Naive thymus-derived CD4-positive, alpha-beta T cell (primary cell): ENCODE measurements at regions of chr4 and their contacts with region 1.

Region 1: GRCh38 chr4:112895811-112896608 is 153.4 kb upstream of the ANK2 start:
- DNase-seq: no peak
- ATAC-seq: no peak
- H3K4me3 ChIP-seq: no peak overlapping the region
- H3K4me3 Mint-ChIP-seq: no peak overlapping the region
- H3K27ac ChIP-seq: no peak overlapping the region
- H3K27ac Mint-ChIP-seq: no peak overlapping the region
- H3K4me1 ChIP-seq: no peaks in the 10 kb centered on the region
- H3K4me1 Mint-ChIP-seq: no peaks in the 10 kb centered on the region
- H3K27me3 ChIP-seq: no peaks in the 10 kb centered on the region
- H3K27me3 Mint-ChIP-seq: peaks cover 0 to 39% (median 20%) of the 10 kb centered on the region in 5 donors

Region 2: GRCh38 chr4:112830753-112831386 is 65.1 kb before region 1 on chr4:
- CTCF ChIA-PET with region 1: no interaction called
- POLR2A ChIA-PET with region 1: no interaction called
- intact Hi-C with region 1: loop called in 1 of 2 experiments (anchors 10 kb)
- DNase-seq: no peak
- ATAC-seq: no peak
- H3K4me3 ChIP-seq: no peak overlapping the region
- H3K4me3 Mint-ChIP-seq: no peak overlapping the region
- H3K27ac ChIP-seq: no peak overlapping the region
- H3K27ac Mint-ChIP-seq: no peak overlapping the region
- H3K4me1 ChIP-seq: no peaks in the 10 kb centered on the region
- H3K4me1 Mint-ChIP-seq: no peaks in the 10 kb centered on the region
- H3K27me3 ChIP-seq: no peaks in the 10 kb centered on the region
- H3K27me3 Mint-ChIP-seq: peaks cover 0 to 13% (median 6%) of the 10 kb centered on the region in 5 donors

Region 3: GRCh38 chr4:112956484-112956896 is 60.5 kb after region 1 on chr4:
- CTCF ChIA-PET with region 1: no interaction called
- POLR2A ChIA-PET with region 1: no interaction called
- intact Hi-C with region 1: no loop called
- DNase-seq: no peak
- ATAC-seq: no peak
- H3K4me3 ChIP-seq: no peak overlapping the region
- H3K4me3 Mint-ChIP-seq: no peak overlapping the region
- H3K27ac ChIP-seq: no peak overlapping the region
- H3K27ac Mint-ChIP-seq: no peak overlapping the region
- H3K4me1 ChIP-seq: no peaks in the 10 kb centered on the region
- H3K4me1 Mint-ChIP-seq: peaks cover 0 to 2% (median 0%) of the 10 kb centered on the region in 7 donors
- H3K27me3 ChIP-seq: no peaks in the 10 kb centered on the region
- H3K27me3 Mint-ChIP-seq: peaks cover 0 to 20% (median 0%) of the 10 kb centered on the region in 5 donors